Activated T-helper 1 cell treated with anti-CD3 and anti-CD28 coated beads, Interleukin-12 subunit alpha, Interleukin-12 subunit beta, Interleukin-2, Interleukin-4 antibody, amounts not matched to agents 30 ng/mL and 10 ng/mL and 1 ng/mL, durations not matched to agents 14 hours and 24 hours and 36 hours (primary cell): ENCODE measurements at regions of chr10 and their contacts with region 1.

Region 1: GRCh38 chr10:84264611-84265141 is 19.8 kb downstream of the RGR start:
- DNase-seq: peak; percentile 53
- H3K4me3 Mint-ChIP-seq: no peak overlapping the region
- H3K27ac Mint-ChIP-seq: no peak overlapping the region
- H3K4me1 Mint-ChIP-seq: peaks cover 20% of the 10 kb centered on the region
- H3K27me3 Mint-ChIP-seq: peaks cover 17% of the 10 kb centered on the region

Region 2: DNA sequence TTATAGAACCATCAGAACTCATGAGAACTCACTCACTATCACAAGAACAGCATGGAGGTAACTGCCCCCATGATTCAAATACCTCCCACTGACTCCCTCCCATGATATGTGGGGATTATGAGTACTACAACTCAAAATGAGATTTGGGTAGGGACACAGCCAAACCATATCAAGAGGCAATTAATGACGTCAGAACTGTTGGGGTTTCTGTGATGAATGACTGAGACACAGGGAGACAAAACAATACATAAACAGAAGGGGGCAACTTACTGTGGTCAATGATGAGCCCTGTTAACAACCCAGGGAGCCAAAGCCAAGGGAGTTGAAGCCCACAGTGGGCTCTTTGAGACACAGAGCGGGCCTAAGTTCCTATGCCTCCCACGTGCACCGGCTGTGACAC is 296.6 kb before region 1 on chr10:
- intact Hi-C with region 1: no loop called
- DNase-seq: no peak
- H3K4me3 Mint-ChIP-seq: no peak overlapping the region
- H3K27ac Mint-ChIP-seq: no peak overlapping the region
- H3K4me1 Mint-ChIP-seq: no peaks in the 10 kb centered on the region
- H3K27me3 Mint-ChIP-seq: peaks cover 3% of the 10 kb centered on the region

Region 3: GRCh38 chr10:84308481-84309304 is 44.0 kb after region 1 on chr10:
- intact Hi-C with region 1: loop called (anchors 5 kb)
- DNase-seq: peak; percentile 37
- H3K4me3 Mint-ChIP-seq: peak overlapping the region; percentile 65
- H3K27ac Mint-ChIP-seq: peak overlapping the region; percentile 77
- H3K4me1 Mint-ChIP-seq: peaks cover 52% of the 10 kb centered on the region
- H3K27me3 Mint-ChIP-seq: peaks cover 1% of the 10 kb centered on the region

Region 4: DNA sequence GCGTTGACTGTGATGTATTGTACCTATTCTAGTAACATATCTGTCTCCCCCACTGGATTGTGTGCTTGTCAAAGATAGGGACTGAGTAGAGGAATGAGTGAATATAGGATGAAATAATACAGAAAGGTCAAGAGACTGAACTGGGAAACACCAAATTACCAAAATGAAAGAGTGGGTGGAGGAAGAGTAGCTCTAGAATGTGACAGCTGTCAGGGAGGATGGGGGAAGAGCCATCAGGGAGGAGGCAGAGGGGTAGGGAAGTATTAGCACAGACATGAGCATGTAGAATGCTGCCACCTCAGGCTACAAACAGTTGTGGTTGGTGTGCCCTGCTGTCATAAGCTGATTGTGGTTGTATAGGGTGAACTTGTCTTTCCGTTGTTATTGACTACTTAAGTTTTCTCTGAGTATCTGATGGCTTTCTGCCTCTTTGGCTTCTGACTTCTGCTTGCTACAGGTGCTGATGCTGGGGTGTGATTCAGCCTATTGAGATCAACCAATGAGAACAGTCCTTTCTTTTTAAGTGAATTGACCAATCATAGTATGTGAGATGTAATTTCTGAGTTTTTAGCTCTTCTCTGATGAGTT is 69.3 kb after region 1 on chr10:
- intact Hi-C with region 1: loop called (anchors 1 kb)
- DNase-seq: peak; percentile 54
- H3K4me3 Mint-ChIP-seq: peak overlapping the region; percentile 54
- H3K27ac Mint-ChIP-seq: peak overlapping the region; percentile 90
- H3K4me1 Mint-ChIP-seq: peaks cover 52% of the 10 kb centered on the region
- H3K27me3 Mint-ChIP-seq: no peaks in the 10 kb centered on the region

Region 5: DNA sequence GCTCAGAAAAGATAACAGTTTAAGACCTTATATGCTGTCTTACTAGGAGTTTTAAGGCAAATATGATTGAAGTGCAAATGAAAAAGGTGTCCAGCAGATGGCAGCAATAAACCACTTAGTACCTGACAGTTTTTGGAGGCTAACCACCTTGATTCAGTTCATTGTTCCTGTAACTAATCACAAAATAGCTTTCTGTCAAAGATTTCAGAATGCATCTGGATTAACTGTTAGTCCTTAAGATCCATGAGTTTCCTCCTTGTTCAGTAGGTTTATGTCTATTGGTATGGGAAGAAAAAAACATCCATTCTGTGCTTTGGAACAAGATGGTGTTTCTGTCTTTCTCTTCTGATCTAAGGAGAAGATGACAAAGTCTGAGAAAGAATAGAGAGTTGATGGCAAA is 110.3 kb after region 1 on chr10:
- intact Hi-C with region 1: loop called (anchors 1 kb)
- DNase-seq: peak; percentile 22
- H3K4me3 Mint-ChIP-seq: no peak overlapping the region
- H3K27ac Mint-ChIP-seq: peak overlapping the region; percentile 12
- H3K4me1 Mint-ChIP-seq: peaks cover 30% of the 10 kb centered on the region
- H3K27me3 Mint-ChIP-seq: no peaks in the 10 kb centered on the region

Region 6: GRCh38 chr10:84537447-84537931 is 272.8 kb after region 1 on chr10:
- intact Hi-C with region 1: loop called (anchors 1 kb)
- DNase-seq: peak; percentile 16
- H3K4me3 Mint-ChIP-seq: no peak overlapping the region
- H3K27ac Mint-ChIP-seq: no peak overlapping the region
- H3K4me1 Mint-ChIP-seq: peaks cover 35% of the 10 kb centered on the region
- H3K27me3 Mint-ChIP-seq: peaks cover 5% of the 10 kb centered on the region